Heart left ventricle (tissue), 16 donors: ENCODE measurements at regions of chr12 and their contacts with region 1.

Region 1: DNA sequence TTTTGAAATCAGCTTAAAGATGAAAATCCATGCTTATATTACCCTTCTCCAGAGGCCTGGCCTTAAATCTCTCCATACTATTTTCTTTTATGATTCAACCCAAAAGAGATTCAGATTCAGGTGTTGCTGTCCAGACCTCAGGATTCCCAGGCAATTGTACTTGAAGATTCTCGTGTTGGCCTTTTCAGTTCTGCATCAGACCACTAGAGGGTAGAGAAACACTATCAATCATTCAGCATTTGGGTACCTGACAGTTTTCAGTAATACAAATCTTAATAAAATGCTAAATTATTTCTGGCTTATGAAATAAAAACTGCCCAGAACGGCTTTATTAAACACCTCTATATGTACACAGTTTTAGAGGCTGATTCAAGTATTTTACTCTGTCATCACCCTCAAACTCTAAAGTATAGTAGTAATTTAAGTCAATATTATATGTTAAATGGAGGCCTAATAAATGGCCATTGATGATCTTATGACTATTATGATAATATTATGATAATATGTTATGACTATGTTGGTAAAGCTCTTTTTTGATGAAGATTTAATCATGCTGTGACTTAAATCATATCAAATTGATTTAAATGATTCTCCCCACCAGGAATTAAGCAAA is 301.1 kb downstream of the DUSP6 start:
- DNase-seq: peak in 2 of 5 donors; percentile 15 to 22
- ATAC-seq: peak in 3 of 4 donors; percentile 68 to 76 (median 70)
- H3K4me3 ChIP-seq: no peak overlapping the region
- H3K27ac ChIP-seq: no peak overlapping the region
- H3K4me1 ChIP-seq: peaks cover 0 to 12% (median 0%) of the 10 kb centered on the region in 12 donors
- H3K27me3 ChIP-seq: no peaks in the 10 kb centered on the region
- CTCF ChIP-seq: peak; percentile 86 to 97 (median 94)
- POLR2A ChIP-seq: no peak

Region 2: DNA sequence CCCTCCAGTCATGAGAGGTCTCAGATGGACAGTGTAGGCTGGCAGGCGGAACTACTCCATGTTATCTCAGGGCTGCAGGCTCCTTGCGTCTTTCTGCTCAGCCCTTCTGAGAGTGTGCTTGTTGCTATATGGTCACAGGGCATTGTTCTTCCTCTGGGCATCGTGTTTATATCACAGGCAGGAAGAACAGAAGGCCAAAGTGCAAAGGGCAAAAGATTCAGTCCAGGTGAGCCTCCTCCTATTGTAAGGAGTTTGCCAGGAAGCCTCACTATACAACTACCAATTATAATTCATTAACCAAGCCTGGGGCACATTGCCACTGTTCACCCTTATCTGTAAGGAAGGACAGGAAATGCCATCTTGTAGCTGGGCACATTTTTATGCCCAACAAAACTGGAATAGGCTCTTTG is 275.4 kb before region 1 on chr12:
- intact Hi-C with region 1: no loop called
- DNase-seq: no peak
- ATAC-seq: no peak
- H3K4me3 ChIP-seq: no peak overlapping the region
- H3K27ac ChIP-seq: no peak overlapping the region
- H3K4me1 ChIP-seq: no peaks in the 10 kb centered on the region
- H3K27me3 ChIP-seq: no peaks in the 10 kb centered on the region
- CTCF ChIP-seq: no peak
- POLR2A ChIP-seq: no peak

Region 3: DNA sequence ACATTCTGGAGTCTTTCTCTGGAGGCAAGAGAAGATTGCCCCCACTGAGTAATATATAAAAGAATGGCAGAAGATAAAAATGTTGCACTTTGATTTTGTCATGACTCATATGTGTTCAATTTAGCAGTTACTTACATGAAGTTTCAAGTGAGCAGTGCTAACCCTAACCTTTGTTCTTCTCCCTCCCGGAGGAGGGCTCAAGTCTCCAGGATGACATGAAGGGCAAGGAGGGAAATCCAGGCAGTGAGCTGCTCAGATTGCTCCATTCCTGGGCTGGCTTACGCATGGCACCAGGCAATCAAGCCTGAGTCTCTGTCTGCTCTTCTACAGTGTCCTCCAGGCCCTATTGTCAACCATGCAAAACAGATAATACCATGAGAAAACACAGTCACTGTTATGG is 21.2 kb before region 1 on chr12:
- intact Hi-C with region 1: no loop called
- DNase-seq: no peak
- ATAC-seq: no peak
- H3K4me3 ChIP-seq: no peak overlapping the region
- H3K27ac ChIP-seq: no peak overlapping the region
- H3K4me1 ChIP-seq: no peaks in the 10 kb centered on the region
- H3K27me3 ChIP-seq: peaks cover 0 to 4% (median 0%) of the 10 kb centered on the region in 9 donors
- CTCF ChIP-seq: no peak
- POLR2A ChIP-seq: no peak

Region 4: DNA sequence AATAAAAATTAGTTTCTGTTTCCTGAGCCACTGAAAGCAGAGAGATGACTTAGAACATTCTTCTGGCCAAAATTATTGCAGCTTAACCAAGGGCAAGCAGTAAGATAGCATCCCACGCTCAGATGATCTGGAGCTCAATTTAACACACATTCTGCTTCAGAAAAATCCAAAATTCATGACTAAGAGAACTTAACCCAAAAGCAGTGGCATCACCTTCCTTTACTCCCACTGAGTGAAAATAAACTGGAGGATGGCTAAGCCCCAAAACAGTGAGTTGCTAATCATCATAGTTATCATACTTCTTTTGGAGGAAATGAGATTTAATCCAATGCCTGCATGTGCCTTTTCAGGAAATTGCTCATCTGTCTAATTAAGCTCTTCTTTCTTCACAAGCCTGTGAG is 105.7 kb after region 1 on chr12:
- intact Hi-C with region 1: loop called in 1 of 10 experiments (anchors 5 kb)
- DNase-seq: no peak
- ATAC-seq: peak in 1 of 4 donors; percentile 55
- H3K4me3 ChIP-seq: no peak overlapping the region
- H3K27ac ChIP-seq: peak overlapping the region in 4 of 12 donors; percentile 17 to 90 (median 34)
- H3K4me1 ChIP-seq: peaks cover 0 to 59% (median 6%) of the 10 kb centered on the region in 12 donors
- H3K27me3 ChIP-seq: no peaks in the 10 kb centered on the region
- CTCF ChIP-seq: no peak
- POLR2A ChIP-seq: no peak

Region 5: GRCh38 chr12:89212339-89212771 is 161.2 kb after region 1 on chr12:
- intact Hi-C with region 1: loop called in 1 of 10 experiments (anchors 10 kb)
- DNase-seq: peak in 4 of 5 donors; percentile 38 to 54 (median 48)
- ATAC-seq: peak; percentile 83 to 97 (median 86)
- H3K4me3 ChIP-seq: no peak overlapping the region
- H3K27ac ChIP-seq: peak overlapping the region; percentile 35 to 76 (median 60)
- H3K4me1 ChIP-seq: peaks cover 0 to 43% (median 9%) of the 10 kb centered on the region in 12 donors
- H3K27me3 ChIP-seq: no peaks in the 10 kb centered on the region
- CTCF ChIP-seq: no peak
- POLR2A ChIP-seq: no peak

Region 6: GRCh38 chr12:89461649-89462612 is 410.8 kb after region 1 on chr12:
- intact Hi-C with region 1: loop called (anchors 1 to 2 kb)
- DNase-seq: no peak
- ATAC-seq: peak; percentile 83 to 93 (median 87)
- H3K4me3 ChIP-seq: peak overlapping the region in 6 of 12 donors; percentile 8 to 35 (median 20)
- H3K27ac ChIP-seq: peak overlapping the region in 8 of 12 donors; percentile 16 to 72 (median 34)
- H3K4me1 ChIP-seq: peaks cover 0 to 16% (median 5%) of the 10 kb centered on the region in 12 donors
- H3K27me3 ChIP-seq: no peaks in the 10 kb centered on the region
- CTCF ChIP-seq: peak; percentile 42 to 76 (median 66)
- POLR2A ChIP-seq: no peak